PC-9 (cell line): ENCODE measurements at regions of chr14 and their contacts with region 1.

Region 1: GRCh38 chr14:101235335-101236103 is 325.8 kb upstream of the DIO3 start:
- DNase-seq: peak in 1 of 2 experiments; percentile 14
- H3K4me3 ChIP-seq: no peak overlapping the region
- H3K27ac ChIP-seq: no peak overlapping the region
- H3K4me1 ChIP-seq: no peaks in the 10 kb centered on the region
- H3K27me3 ChIP-seq: no peaks in the 10 kb centered on the region
- CTCF ChIP-seq: peak; percentile 74

Region 2: DNA sequence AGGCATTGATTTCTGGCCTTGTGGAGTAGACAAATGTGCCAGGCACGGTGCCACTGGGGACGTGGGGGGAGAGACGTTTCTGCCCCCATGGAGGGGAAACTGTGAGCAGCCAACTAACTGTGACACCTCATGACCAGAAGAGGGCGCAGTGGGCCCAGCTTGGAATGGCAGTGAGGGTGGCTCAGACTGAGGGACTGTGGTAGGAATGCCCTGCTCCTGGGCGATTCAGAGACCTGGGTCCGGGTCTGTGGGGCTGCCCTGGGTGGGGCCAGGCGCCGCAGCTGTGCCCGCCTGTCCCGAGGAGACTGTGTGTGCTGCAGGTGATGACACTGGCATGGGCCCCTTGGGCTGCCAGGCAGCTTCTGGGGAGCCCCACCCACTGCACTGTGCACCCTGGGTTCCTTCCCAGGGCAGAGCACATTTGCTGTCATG is 851.8 kb before region 1 on chr14:
- CTCF ChIA-PET with region 1: no interaction called
- POLR2A ChIA-PET with region 1: no interaction called
- intact Hi-C with region 1: loop called (anchors 10 kb)
- DNase-seq: no peak
- H3K4me3 ChIP-seq: no peak overlapping the region
- H3K27ac ChIP-seq: no peak overlapping the region
- H3K4me1 ChIP-seq: no peaks in the 10 kb centered on the region
- H3K27me3 ChIP-seq: no peaks in the 10 kb centered on the region
- CTCF ChIP-seq: peak; percentile 75

Region 3: GRCh38 chr14:100662879-100663760 is 572.4 kb before region 1 on chr14:
- CTCF ChIA-PET with region 1: no interaction called
- POLR2A ChIA-PET with region 1: no interaction called
- intact Hi-C with region 1: loop called (anchors 10 kb)
- DNase-seq: peak; percentile 4 to 38
- H3K4me3 ChIP-seq: no peak overlapping the region
- H3K27ac ChIP-seq: no peak overlapping the region
- H3K4me1 ChIP-seq: no peaks in the 10 kb centered on the region
- H3K27me3 ChIP-seq: no peaks in the 10 kb centered on the region
- CTCF ChIP-seq: peak; percentile 91

Region 4: DNA sequence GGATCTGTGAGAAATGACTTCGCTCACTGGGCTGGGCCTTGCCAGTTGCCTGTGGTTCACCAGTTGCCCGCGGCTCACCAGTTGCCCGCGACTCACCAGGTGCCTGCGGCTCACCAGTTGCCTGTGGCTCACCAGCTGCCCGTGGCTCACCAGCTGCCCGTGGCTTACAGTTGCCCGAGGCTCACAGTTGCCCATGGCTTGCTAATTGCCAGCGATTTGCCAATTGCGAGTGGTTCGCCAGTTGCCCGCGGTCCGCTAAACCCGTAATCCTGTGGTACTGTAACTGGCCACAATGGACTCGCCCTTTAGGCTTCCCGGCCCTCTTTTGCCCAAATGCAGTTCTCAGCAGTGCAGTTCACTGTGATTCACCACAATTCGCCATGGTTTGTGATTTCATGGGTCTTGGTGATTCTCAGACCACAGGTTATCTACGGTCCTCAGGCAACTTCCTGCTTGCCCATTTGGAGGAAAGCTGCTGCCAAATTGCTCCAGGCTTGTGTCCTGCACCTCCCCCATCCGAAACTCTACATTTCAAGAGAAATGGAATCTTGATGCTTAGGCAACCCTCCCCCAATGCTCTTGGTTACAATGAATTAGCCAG is 424.6 kb before region 1 on chr14:
- CTCF ChIA-PET with region 1: no interaction called
- POLR2A ChIA-PET with region 1: no interaction called
- intact Hi-C with region 1: no loop called
- DNase-seq: no peak
- H3K4me3 ChIP-seq: no peak overlapping the region
- H3K27ac ChIP-seq: no peak overlapping the region
- H3K4me1 ChIP-seq: no peaks in the 10 kb centered on the region
- H3K27me3 ChIP-seq: peaks cover 81% of the 10 kb centered on the region
- CTCF ChIP-seq: no peak

Region 5: DNA sequence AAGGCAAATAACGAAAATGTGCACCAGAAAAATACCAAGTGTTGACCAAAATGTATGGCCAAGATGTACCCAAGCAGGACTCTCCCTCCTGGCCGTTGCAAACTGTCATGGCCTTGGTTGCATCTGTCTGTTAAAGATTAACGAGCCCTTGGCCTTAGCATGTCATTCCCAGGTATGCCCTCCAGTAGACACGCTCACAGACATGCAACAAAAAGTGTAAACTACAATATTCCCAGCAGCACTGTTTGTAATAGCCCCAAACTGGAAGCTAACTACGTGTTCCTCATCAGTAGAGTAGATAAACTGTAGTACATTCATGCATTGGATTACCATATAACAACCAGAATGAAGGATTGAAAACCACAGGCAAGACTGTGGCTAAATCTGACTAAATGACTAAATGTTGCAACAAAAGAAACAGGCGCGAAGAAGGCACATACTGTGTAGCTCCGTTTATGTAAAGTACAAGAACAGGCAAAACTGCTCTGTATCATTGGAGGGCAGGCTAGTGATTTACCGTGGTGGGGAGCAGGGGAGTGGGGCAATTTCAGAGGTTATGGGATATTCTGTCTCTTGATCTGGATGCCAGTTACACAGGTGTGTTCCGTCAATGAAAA is 93.0 kb after region 1 on chr14:
- CTCF ChIA-PET with region 1: no interaction called
- POLR2A ChIA-PET with region 1: no interaction called
- intact Hi-C with region 1: no loop called
- DNase-seq: no peak
- H3K4me3 ChIP-seq: no peak overlapping the region
- H3K27ac ChIP-seq: no peak overlapping the region
- H3K4me1 ChIP-seq: peaks cover 7% of the 10 kb centered on the region
- H3K27me3 ChIP-seq: no peaks in the 10 kb centered on the region
- CTCF ChIP-seq: no peak